Aorta (tissue), 5 donors: ENCODE measurements at regions of chr20 and their contacts with region 1.

Region 1: DNA sequence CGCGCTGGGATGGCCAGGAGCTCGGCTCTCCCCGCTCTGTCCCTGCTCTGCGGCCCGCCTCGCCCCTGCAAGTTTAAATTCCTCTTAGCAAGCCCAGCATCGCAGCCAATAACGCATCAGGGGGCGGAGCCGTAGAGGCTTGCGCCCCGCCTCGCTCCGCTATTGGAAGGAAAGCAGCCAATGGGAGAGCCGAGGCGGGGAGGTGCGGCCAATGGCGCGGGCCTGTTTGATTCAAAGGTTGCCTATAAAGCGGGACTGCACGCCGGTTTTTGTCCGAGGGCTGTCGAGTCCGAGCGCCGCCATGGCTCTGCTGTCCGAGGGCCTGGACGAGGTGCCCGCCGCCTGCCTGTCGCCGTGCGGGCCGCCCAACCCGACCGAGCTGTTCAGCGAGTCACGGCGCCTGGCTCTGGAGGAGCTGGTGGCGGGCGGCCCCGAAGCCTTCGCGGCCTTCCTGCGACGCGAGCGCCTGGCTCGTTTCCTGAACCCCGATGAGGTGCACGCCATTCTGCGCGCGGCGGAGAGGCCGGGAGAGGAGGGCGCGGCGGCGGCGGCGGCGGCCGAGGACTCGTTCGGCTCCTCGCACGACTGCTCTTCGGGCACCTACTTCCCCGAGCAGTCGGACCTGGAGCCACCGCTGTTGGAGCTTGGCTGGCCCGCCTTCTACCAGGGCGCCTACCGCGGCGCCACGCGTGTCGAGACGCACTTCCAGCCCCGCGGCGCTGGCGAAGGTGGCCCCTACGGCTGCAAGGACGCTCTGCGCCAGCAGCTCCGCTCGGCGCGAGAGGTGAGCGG is at the start of gene FAM83D:
- DNase-seq: peak; percentile 96
- ATAC-seq: peak; percentile 96
- H3K4me3 ChIP-seq: peak within 1 kb of the TSS; percentile 8 to 44
- H3K27ac ChIP-seq: no peak within 1 kb of the TSS
- H3K4me1 ChIP-seq: no peaks in the 10 kb centered on the region
- H3K27me3 ChIP-seq: no peaks in the 10 kb centered on the region
- total RNA-seq, gene FAM83D: 3.4 to 6.1 TPM

Region 2: DNA sequence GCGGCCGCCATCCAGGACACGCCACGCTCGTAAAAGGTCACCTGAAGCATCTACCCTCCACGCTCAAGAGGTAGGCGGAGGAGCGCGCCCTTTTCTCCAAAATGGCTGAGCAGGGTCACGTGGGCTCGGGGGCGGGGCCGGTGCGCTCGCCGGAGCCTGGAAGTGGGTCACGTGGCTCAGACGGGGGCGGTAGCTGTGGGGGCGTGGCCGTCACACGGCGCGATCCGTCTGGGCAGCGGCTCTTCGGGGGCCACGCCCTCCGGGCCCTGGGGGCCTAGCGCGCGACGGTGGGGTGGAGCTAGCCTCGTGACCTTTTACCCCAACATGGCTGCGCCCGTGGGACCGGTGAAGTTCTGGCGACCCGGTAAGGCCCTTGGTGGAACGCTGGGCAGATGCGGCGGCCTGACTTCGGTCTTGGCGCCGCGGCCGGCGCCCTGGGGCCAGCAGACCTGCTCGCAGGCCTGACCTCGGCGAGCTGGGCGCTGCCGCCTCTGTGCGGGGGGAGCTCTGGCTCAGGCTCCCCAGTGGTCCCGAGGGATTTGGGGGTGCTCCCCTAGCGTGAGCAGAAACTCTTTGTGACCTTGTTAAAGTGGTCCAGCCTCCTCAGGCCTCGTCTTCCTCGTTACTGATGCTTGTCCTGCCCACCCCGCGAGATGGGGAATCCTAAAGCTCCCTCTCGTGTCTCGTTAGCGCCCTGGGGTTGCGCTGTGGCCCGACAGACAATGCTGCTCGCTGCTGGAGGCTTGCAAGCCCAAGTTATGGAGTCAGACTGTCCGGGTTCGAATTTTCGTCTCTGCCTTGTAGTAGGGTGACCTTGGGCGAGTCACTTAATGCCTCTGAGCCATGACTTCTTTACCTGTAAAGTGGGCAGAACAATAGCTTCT is 35.9 kb after region 1 on chr20 and contains the start of gene DHX35:
- intact Hi-C with region 1: loop called in 1 of 2 experiments (anchors 2 kb)
- DNase-seq: peak; percentile 99 to 100
- ATAC-seq: peak; percentile 100
- H3K4me3 ChIP-seq: peak within 1 kb of the TSS; percentile 86 to 89
- H3K27ac ChIP-seq: peak within 1 kb of the TSS in 1 of 2 donors; percentile 76
- H3K4me1 ChIP-seq: peaks cover 2 to 5% of the 10 kb centered on the region in 2 donors
- H3K27me3 ChIP-seq: no peaks in the 10 kb centered on the region
- total RNA-seq, gene DHX35: 11.3 TPM

Region 3: DNA sequence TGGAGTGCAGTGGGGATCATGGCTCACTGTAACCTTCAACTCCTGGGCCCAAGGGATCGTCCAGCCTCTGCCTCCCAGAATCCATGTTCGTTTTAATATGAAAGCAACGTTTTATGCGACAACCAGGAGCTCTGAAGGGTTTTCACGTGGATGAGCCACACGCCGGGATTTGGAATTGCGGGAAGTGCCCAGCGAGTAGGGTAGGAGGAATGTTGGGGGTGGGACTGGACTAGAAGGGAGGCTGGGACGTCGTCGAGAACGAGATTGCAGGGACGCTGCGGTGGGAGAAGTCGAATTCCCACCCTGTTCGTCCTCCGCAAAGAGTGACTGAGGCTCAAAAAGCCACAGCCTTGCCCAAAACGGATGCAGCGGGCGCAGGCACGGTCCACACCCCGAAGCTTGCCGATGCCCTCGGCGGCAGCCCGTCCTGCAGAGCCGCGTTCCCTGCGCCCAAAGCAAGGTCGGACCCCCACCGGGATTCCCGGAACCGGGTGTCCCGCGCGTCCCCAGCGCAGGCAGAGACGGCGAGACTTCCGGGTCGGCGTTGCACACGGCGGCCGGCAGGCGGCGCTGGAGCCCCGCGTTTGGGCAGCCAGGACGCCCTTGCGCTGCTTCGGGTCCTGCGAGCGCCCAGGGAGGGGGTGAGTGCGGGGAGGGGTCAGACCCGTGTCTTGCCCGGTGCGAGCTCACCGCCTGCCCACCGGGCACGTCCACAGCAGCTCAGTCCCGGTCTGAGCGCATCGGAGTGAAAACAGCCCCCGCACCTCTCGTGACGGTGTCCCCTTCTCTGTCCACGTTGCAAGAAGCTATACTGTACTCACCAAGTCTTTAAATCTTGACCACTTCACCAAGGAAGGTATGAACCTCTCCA is 123.6 kb after region 1 on chr20:
- intact Hi-C with region 1: loop called in 1 of 2 experiments (anchors 1 kb)
- DNase-seq: peak; percentile 86 to 94
- ATAC-seq: peak; percentile 93
- H3K4me3 ChIP-seq: peak overlapping the region; percentile 63 to 66
- H3K27ac ChIP-seq: peak overlapping the region in 1 of 2 donors; percentile 41
- H3K4me1 ChIP-seq: no peaks in the 10 kb centered on the region
- H3K27me3 ChIP-seq: peaks cover 0 to 3% of the 10 kb centered on the region in 2 donors